Motor neuron (in vitro differentiated cells): ENCODE measurements at regions of chr1 and their contacts with region 1.

Region 1: DNA sequence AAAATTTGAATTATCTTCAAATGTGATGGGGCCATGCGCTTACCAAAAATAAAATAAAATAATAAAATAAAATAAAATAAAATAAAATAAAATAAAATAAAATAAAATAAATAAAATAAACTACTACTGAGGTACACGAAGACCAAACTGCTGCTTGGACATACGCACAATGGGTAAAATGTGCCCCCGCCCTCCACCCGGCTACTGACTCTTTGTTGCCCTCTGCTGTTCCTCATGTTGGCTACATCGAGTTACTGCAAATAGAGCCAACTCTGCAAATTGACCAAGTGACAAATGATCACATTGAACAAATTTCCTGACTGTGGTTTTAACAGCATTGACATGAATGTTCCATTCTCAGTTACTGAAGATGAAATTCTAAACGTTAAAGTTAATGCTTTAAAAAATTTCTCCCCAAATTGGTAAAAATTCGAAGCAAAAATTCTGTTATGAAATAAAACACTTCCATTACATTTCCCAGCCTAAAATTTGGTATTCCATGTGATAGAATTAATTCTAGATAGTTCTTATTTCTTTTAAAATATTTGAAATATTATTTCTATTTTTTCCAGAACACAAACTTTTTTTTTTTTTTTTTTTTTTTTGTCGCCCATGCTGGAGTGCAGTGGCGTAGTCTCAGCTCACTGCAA is 18.8 kb upstream of the MAP1LC3C start:
- ATAC-seq: peak in 3 of 8 experiments; percentile 54 to 75 (median 55)
- H3K4me3 ChIP-seq: no peak overlapping the region
- H3K27ac ChIP-seq: no peak overlapping the region
- H3K4me1 ChIP-seq: no peaks in the 10 kb centered on the region

Region 2: DNA sequence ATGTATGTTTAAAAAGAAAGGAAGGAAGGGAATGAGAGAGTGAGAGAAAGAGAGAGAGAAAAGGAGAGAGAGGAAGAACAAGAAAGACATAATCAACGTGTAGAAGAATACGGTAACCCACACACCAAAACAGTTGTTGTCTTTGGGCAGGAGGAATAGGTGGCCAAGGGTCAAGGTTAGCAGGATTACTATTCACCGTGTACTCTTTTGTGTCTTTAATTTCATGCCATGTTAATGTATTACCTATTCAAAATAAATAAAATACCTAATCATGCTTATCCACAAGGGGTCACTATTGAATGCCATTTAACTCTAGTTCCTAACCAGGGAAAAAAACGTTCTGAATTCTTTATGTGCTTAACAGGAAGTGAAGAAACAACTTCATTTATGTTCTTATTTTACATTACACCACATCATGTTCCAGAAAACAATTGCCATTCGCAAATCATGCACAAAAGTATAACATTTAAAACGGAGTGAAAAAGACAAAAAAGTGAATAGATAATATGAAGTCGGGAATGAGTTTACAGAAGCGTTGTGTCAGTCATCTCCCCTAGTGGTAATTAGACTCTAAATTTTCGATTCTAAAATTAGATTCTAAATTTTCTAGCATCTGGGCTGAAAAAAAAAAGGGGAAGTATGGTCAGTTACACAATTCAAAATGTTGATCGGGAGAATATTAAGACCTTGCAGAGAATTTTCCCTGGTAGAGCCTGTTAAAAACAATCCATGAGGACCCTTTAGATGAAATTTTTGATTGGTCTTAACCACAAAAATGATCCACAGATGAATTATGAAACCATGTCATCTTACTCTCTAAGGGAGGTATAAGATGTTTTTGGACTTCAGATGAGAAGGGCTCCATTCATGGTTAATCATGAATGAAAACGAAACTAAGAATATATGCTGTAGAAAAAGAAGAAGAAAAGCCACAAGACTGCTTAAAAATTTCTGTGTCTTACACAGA is 486.2 kb before region 1 on chr1:
- in situ Hi-C with region 1: loop called in 1 of 9 experiments (anchors 25 kb)
- ATAC-seq: peak; percentile 35 to 92 (median 54)
- H3K4me3 ChIP-seq: peak overlapping the region in 4 of 5 donors; percentile 10 to 18 (median 12)
- H3K27ac ChIP-seq: no peak overlapping the region
- H3K4me1 ChIP-seq: peaks cover 0 to 3% of the 10 kb centered on the region in 2 donors

Region 3: DNA sequence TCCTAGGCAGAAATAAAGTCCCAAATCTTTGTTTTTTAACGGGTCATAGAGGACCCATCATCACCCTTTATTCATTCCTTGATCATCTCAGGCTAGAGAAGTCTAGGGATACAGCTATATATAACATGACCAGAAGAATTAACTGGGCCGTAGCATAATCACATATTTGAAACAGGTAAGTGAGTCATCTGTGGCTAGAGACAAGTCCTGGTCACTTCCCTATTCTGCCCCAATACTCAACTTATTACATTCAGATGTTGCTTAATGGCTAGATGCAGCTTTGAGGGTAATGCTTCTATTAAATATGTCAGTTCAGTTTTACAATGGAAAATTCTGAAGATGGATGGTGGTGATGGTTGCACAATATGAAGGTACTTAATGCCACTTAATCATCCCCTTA is 122.7 kb before region 1 on chr1:
- in situ Hi-C with region 1: loop called in 1 of 9 experiments (anchors 25 kb)
- ATAC-seq: no peak
- H3K4me3 ChIP-seq: no peak overlapping the region
- H3K27ac ChIP-seq: no peak overlapping the region
- H3K4me1 ChIP-seq: no peaks in the 10 kb centered on the region

Region 4: GRCh38 chr1:242425232-242425631 is 407.5 kb after region 1 on chr1:
- in situ Hi-C with region 1: loop called in 2 of 9 experiments (anchors 25 kb)
- ATAC-seq: no peak
- H3K4me3 ChIP-seq: no peak overlapping the region
- H3K27ac ChIP-seq: no peak overlapping the region
- H3K4me1 ChIP-seq: peaks cover 19 to 26% of the 10 kb centered on the region in 2 donors

Region 5: DNA sequence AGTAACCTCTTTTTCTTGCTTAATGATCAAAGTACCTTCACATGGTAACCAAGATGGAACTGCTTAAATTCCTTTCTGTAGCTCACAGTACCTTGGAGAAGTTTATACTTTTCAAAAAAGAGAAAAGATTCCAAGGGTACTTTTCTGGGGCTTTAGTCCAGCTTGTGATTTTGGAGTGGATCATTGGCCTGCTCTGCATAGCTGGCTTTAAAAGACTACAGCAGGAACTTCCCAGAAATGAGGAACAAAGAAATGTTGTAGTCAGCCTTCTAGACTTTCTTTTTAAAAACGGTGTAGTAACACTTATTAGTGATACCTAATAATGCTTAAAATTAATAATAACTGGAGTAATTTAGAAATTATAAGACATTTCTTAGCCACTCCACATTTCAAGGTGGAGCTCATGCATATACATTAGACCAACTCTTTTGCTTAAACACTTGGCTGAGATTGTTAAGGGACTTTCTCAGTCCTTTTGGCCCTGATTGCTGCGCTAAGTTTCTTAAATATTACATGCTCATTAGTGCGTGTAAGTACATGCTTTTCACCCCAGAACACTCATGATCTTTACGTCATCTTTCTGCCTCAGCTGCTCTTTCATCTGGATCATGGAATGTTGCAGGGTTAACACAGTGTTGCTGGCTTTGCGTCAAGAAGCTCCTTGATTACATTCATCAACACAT is 1295.4 kb after region 1 on chr1:
- in situ Hi-C with region 1: loop called in 2 of 9 experiments (anchors 25 kb)
- ATAC-seq: no peak
- H3K4me3 ChIP-seq: no peak overlapping the region
- H3K27ac ChIP-seq: no peak overlapping the region
- H3K4me1 ChIP-seq: peaks cover 6 to 13% of the 10 kb centered on the region in 2 donors